Ascending aorta (tissue), 2 donors: ENCODE measurements at regions of chr7 and their contacts with region 1.

Region 1: DNA sequence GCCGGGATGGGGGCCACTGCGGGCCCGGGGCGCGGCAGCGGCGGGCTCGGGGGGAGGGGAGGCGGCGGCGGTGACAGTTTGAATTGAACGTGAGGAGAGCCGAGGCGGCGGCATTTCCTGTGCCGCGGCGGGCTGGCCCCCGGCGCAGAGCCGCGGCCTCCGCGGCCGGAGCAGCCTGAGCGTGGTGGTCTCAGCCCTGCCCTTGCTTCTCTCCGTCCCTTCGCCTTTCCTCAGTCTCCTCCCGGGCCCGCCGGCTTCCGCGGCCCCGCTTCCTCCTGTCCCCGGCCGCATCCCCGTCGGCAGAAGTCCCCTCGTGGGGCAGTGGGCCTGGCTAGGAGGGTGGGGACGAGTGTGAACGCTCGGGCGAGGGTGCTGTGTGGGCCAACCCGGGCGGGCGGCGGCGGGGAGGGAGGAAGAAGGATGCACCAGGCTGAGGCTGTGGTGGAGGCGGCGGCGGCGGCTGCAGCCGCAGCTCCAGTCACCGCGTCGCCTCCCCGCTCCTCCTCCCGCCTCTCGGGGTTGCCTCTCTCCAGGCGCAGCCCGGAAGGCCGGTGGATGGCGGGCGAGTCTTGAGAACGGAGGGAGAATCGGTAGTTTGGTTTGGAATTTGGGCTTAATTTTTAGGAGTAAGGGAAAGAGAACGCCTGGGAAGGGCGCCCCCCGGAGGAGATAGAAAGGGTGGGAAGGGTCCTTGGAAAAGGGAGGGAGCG is 690 bp downstream of the SEPTIN7 start:
- DNase-seq: peak; percentile 21 to 83
- H3K4me3 ChIP-seq: peak overlapping the region; percentile 81 to 83
- H3K27ac ChIP-seq: peak overlapping the region; percentile 98 to 99
- H3K4me1 ChIP-seq: peaks cover 0 to 16% of the 10 kb centered on the region in 2 donors
- H3K27me3 ChIP-seq: no peaks in the 10 kb centered on the region
- CTCF ChIP-seq: peak; percentile 39 to 71 (median 48)

Region 2: DNA sequence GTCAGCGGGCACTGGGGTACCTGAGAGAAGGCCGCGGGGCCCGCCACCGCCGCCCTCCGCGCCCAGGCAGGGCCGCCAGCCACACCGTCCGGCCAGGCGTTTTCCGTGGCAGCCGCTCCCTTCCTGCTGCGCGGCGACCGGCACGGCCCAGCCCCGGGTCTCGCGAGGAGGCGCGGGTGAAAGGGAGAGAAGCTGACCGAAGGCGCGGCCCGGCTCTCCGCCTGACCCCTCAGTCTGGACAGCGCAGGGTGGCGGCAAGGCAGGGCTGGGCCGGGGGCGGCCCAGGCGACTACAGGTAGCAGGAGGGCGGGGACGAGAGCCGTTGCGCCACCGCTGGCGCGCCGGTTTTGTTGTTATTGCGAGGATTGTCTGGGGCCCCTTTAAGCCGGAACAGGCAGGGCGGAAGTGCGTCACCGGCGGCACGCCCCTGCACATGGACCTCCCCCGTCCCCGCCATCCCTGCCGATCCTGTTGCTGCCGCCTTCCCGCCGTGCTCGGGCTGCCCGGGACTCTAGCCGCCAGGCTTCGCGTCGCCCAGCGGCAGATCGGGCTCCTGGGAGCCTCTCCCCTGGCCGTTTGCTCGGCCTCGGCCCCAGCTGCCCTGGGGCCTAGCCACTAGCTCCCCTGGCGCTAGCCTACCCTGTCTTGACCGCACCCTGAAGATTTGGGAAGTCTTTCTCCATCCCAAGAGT is 106.6 kb before region 1 on chr7 and contains the start of gene HERPUD2:
- intact Hi-C with region 1: loop called (anchors 1 kb)
- DNase-seq: peak; percentile 76 to 95
- H3K4me3 ChIP-seq: peak within 1 kb of the TSS; percentile 81 to 86
- H3K27ac ChIP-seq: peak within 1 kb of the TSS; percentile 93 to 97
- H3K4me1 ChIP-seq: peaks cover 3 to 21% of the 10 kb centered on the region in 2 donors
- H3K27me3 ChIP-seq: no peaks in the 10 kb centered on the region
- CTCF ChIP-seq: no peak
- total RNA-seq, gene HERPUD2: 69.8 TPM

Region 3: DNA sequence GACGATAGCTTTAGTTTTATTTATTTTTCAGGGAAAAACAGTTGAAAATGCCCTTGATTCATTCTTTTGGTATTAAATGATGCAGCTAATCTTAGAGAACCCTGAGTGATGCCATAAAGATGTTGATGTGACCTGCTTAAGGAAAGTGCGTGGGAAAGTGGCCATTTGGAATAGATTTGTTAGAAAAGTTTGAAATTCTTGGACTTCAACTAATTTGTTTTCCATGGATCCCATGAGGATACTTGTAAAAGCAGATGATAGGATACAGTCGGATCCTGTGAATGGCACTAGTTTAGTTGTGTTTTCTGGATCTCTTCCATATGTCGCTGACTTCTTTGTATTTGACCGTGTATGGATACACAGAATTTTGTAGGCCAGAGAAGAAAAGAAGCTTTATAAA is 68.3 kb after region 1 on chr7:
- intact Hi-C with region 1: loop called (anchors 5 kb)
- DNase-seq: no peak
- H3K4me3 ChIP-seq: no peak overlapping the region
- H3K27ac ChIP-seq: peak overlapping the region in 1 of 2 donors; percentile 17
- H3K4me1 ChIP-seq: peaks cover 0 to 2% of the 10 kb centered on the region in 2 donors
- H3K27me3 ChIP-seq: no peaks in the 10 kb centered on the region
- CTCF ChIP-seq: no peak

Region 4: GRCh38 chr7:36115448-36116321 is 314.1 kb after region 1 on chr7:
- intact Hi-C with region 1: loop called (anchors 10 kb)
- DNase-seq: peak; percentile 21 to 91
- H3K4me3 ChIP-seq: peak overlapping the region in 1 of 2 donors; percentile 6
- H3K27ac ChIP-seq: peak overlapping the region; percentile 78 to 82
- H3K4me1 ChIP-seq: peaks cover 24 to 45% of the 10 kb centered on the region in 2 donors
- H3K27me3 ChIP-seq: no peaks in the 10 kb centered on the region
- CTCF ChIP-seq: no peak

Region 5: GRCh38 chr7:36303202-36304098 is 501.9 kb after region 1 on chr7:
- intact Hi-C with region 1: loop called (anchors 5 kb)
- DNase-seq: peak; percentile 76 to 97
- H3K4me3 ChIP-seq: no peak overlapping the region
- H3K27ac ChIP-seq: peak overlapping the region; percentile 70 to 88
- H3K4me1 ChIP-seq: peaks cover 5 to 25% of the 10 kb centered on the region in 2 donors
- H3K27me3 ChIP-seq: no peaks in the 10 kb centered on the region
- CTCF ChIP-seq: no peak

Region 6: DNA sequence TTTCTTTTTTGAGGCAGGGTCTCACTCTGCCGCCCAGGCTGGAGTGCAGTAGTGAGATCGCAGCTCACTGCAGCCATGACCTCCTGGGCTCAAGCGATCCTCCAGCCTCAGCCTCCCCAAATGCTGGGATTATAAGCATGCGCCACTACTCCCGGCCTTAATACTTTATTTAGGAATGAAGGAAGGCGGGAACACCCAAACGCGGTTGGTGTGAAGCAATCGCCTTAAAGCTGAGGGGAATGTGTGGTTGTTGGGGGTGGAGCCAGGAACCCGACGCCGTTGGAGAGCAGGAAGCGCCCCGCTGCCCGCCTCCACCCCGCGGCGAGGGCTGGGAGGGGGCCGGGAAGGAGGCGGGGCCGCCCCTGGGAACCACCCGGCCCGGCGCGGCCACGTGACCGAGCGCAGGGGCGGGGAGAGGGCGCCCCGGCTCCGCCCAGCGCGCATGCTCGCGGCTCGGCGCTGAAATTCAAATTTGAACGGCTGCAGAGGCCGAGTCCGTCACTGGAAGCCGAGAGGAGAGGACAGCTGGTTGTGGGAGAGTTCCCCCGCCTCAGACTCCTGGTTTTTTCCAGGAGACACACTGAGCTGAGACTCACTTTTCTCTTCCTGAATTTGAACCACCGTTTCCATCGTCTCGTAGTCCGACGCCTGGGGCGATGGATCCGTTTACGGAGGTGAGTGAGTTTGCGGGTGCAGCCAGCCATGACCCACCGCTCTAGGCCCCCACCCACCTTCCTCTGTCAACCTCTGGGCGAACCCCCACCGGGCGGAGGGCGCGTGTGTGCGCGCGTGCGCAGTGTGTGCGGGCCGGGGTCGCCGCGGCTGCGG is 588.0 kb after region 1 on chr7 and contains the start of gene ANLN:
- intact Hi-C with region 1: loop called (anchors 5 kb)
- DNase-seq: peak; percentile 70 to 97
- H3K4me3 ChIP-seq: peak within 1 kb of the TSS; percentile 53 to 77
- H3K27ac ChIP-seq: peak within 1 kb of the TSS; percentile 83 to 87
- H3K4me1 ChIP-seq: peaks cover 0 to 10% of the 10 kb centered on the region in 2 donors
- H3K27me3 ChIP-seq: no peaks in the 10 kb centered on the region
- CTCF ChIP-seq: no peak
- total RNA-seq, gene ANLN: 1.8 TPM